ENCODE measurements at regions of chr2 and their contacts with region 1.

Region 1: DNA sequence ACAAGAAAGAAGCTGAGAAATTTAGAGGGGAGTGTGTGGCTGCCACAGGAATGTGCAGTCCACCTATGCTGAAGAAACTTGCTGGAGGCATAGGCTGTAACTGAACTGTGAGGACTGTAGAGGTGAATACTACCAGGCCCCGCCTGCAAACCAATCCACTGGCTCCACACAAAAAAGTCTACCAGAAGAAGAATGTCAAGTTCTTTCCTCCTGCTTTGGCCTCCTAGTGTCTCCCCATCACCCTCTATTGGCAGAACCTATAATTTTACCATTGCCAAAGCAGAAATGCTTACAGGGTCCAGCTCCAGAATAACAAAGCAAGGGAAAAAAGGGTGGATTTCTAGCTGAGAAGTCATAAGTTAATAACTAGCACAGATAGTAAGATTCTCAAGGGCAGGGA is 5.9 kb upstream of the ATP5MC3 start:
- DNase-seq: peak; percentile 66
- ATAC-seq: peak; percentile 98
- H3K4me3 ChIP-seq: no peak overlapping the region
- H3K27ac ChIP-seq: no peak overlapping the region
- H3K4me1 ChIP-seq: 0 out of 2 replicates have a peak, but pooled peaks cover 5% of the 10 kb centered on the region
- H3K27me3 ChIP-seq: no peaks in the 10 kb centered on the region; a peak in 1 of 5 replicates
- CTCF ChIP-seq: peak; percentile 63
- EP300 ChIP-seq: no peak
- POLR2A ChIP-seq: no peak
- RAD21 ChIP-seq: 0 out of 2 replicates have a peak, but pooled peaks have one; percentile 31

Region 2: GRCh38 chr2:174888646-174889271 is 298.6 kb before region 1 on chr2:
- CTCF ChIA-PET with region 1: no interaction called
- POLR2A ChIA-PET with region 1: no interaction called
- in situ Hi-C with region 1: no loop called
- intact Hi-C with region 1: no loop called
- DNase-seq: no peak
- ATAC-seq: no peak
- H3K4me3 ChIP-seq: no peak overlapping the region
- H3K27ac ChIP-seq: no peak overlapping the region
- H3K4me1 ChIP-seq: no peaks in the 10 kb centered on the region
- H3K27me3 ChIP-seq: no peaks in the 10 kb centered on the region
- CTCF ChIP-seq: no peak
- EP300 ChIP-seq: no peak
- POLR2A ChIP-seq: no peak
- RAD21 ChIP-seq: no peak

Region 3: GRCh38 chr2:175111200-175111657 is 76.1 kb before region 1 on chr2:
- CTCF ChIA-PET with region 1: interaction called, 10 read pairs
- POLR2A ChIA-PET with region 1: no interaction called
- in situ Hi-C with region 1: no loop called
- intact Hi-C with region 1: loop called (anchors 1 kb)
- DNase-seq: peak; percentile 61
- ATAC-seq: peak; percentile 76
- H3K4me3 ChIP-seq: no peak overlapping the region
- H3K27ac ChIP-seq: no peak overlapping the region
- H3K4me1 ChIP-seq: no peaks in the 10 kb centered on the region
- H3K27me3 ChIP-seq: no peaks in the 10 kb centered on the region
- CTCF ChIP-seq: peak; percentile 62
- EP300 ChIP-seq: no peak
- POLR2A ChIP-seq: no peak
- RAD21 ChIP-seq: peak; percentile 26; the same call in 1 of the 2 replicates